BJ (cell line): ENCODE measurements at regions of chr5 and their contacts with region 1.

Region 1: GRCh38 chr5:134411546-134412266 is at the start of gene CDKN2AIPNL:
- DNase-seq: peak; percentile 15
- H3K4me3 ChIP-seq: peak within 1 kb of the TSS; percentile 93
- H3K27me3 ChIP-seq: no peaks in the 10 kb centered on the region
- CTCF ChIP-seq: peak; percentile 71
- polyA plus RNA-seq, gene CDKN2AIPNL: 10.5 and 18.9 TPM in 2 replicates

Region 2: DNA sequence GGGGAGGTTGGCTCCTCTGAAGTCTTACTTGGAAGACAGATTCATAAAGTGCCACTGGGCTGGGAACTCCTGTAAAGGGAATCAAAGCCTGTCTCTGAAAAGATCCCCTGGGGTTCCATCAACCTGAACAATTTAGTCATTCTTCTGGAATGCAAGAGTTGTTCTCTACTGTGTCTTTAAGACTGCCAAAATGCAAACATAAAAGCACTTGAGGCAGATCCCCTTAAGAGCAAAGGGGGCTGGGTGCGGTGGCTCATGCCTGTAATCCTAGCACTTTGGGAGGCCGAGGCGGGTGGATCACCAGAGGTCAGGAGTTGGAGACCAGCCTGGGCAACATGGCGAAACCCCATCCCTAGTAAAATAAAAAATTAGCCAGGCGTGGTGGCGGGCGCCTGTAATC is 16.8 kb before region 1 on chr5:
- CTCF ChIA-PET with region 1: interaction called, 12 read pairs
- POLR2A ChIA-PET with region 1: no interaction called
- DNase-seq: no peak
- H3K4me3 ChIP-seq: no peak overlapping the region
- H3K27me3 ChIP-seq: no peaks in the 10 kb centered on the region
- CTCF ChIP-seq: no peak

Region 3: GRCh38 chr5:134430001-134430569 is 18.4 kb after region 1 on chr5:
- CTCF ChIA-PET with region 1: interaction called, 13 read pairs
- POLR2A ChIA-PET with region 1: no interaction called
- DNase-seq: no peak
- H3K4me3 ChIP-seq: no peak overlapping the region
- H3K27me3 ChIP-seq: no peaks in the 10 kb centered on the region
- CTCF ChIP-seq: no peak

Region 4: DNA sequence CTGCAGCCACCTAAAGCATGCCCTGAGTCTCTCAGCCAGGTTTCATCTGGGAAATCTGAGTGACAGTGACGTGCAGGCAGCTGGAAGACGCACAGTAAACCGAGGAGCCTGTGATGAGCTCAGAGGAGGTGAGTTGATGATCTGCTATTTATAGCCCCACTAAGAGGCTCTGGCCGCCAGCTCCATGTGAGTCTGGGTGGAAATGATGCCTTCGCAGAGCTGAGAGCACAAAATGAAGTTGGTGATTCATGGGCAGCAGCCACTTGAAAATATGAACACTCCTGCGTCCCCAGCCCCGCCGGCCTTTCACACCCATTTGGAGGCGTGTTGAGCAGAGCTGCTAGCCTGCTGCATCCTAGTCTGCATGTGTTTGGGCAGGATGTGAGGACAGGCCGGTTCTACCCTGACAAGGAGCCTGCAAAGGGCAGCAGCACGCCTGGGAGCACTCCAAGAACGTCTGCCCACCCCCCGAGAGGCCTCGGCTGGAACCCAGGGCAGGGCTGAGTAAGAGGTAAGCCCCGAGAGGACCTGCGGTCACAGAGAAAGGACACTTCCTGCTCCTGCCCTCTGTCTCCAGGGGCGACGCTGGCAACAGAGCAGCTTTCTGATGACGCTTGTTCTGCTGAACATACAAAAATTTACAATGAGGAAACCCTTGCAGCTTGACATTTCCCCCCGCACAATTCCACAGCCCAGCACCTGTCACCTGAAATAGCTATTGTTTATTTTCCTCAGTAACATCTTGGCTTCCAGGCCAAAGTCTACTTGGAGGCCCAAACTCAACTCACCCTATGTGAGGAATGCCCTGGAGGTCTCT is 25.0 kb after region 1 on chr5:
- CTCF ChIA-PET with region 1: interaction called, 10 read pairs
- POLR2A ChIA-PET with region 1: no interaction called
- DNase-seq: peak; percentile 77
- H3K4me3 ChIP-seq: no peak overlapping the region
- H3K27me3 ChIP-seq: no peaks in the 10 kb centered on the region
- CTCF ChIP-seq: no peak

Region 5: DNA sequence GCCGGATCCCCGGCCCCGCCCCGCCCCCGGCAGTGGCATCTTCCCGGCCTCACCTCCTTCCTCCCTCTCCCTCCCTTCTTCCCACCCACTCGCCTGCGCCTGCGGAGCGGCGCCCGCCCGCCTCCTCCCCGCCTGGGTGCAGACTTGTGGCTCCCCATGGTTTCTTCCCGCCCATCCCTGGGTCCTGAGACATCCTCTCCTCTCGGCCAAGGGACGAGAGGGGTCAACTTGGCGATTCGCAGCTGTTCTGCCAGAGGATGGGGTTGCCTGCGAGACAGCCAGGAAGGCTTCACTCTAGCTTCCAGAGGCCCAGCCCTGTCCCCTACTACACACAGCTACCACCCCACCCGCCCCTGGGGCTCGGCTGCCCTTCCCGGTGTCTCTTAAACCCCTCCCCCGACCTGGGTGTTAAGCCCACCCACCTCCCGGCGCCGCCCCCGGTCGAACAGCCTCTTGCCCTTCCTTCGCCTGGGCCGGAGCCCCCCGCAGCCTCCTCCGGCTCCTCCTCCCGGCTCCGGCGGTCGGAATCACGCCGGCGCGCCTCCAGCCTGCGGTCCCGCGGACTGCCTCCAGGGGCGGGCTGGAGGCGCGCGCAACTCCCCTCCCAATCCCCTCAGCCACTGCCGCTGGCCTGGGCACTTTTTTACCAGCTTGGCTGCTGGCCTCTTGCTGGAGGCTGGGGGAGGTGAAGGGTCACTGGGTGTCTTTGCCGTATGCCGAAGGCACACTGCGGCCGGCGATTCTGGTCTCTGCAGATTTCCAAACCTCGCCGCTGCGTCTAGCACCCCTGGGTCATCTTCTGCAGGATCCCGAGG is 115.6 kb after region 1 on chr5:
- CTCF ChIA-PET with region 1: interaction called, 28 read pairs
- POLR2A ChIA-PET with region 1: no interaction called
- DNase-seq: peak; percentile 52
- H3K4me3 ChIP-seq: peak overlapping the region; percentile 84
- H3K27me3 ChIP-seq: no peaks in the 10 kb centered on the region
- CTCF ChIP-seq: peak; percentile 72

Region 6: GRCh38 chr5:134577796-134578363 is 166.2 kb after region 1 on chr5:
- CTCF ChIA-PET with region 1: interaction called, 12 read pairs
- POLR2A ChIA-PET with region 1: no interaction called
- DNase-seq: no peak
- H3K4me3 ChIP-seq: no peak overlapping the region
- H3K27me3 ChIP-seq: no peaks in the 10 kb centered on the region
- CTCF ChIP-seq: peak; percentile 87

Region 7: DNA sequence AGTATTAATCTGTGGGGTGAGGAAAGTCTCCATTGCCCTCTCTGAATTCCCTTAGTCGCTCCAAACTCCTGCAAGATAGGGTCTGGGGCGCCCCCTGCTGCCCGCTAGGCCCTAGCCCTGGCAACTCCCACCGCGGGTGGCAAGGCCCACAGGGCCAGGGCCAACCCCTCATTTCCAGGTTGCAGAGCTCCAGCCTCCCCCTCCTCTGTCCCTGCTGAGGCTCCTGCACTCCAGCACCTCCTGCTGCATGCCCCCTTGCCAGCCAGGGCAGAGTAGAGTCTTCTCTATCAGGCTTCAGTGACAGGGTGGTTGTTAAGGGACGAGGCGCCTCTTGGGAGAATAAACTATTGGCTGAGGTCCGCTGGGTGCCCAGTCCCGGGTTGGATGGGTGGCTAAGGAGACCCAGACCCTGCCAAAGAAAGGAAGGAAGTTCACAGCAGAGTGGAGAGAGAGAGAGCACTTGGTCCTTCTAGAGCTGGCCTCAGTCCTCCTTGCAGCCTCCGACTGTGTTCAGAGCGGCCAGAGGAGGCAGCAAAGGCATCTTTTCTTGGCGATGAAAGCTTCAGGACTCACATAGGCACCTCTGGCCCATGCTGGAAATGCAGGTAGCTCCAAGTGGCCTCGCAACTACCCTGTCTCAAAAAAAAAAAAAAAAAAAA is 175.3 kb after region 1 on chr5:
- CTCF ChIA-PET with region 1: interaction called, 14 read pairs
- POLR2A ChIA-PET with region 1: no interaction called
- DNase-seq: no peak
- H3K4me3 ChIP-seq: no peak overlapping the region
- H3K27me3 ChIP-seq: no peaks in the 10 kb centered on the region
- CTCF ChIP-seq: peak; percentile 88